ENCODE measurements at regions of chr2 and their contacts with region 1.

Region 1: DNA sequence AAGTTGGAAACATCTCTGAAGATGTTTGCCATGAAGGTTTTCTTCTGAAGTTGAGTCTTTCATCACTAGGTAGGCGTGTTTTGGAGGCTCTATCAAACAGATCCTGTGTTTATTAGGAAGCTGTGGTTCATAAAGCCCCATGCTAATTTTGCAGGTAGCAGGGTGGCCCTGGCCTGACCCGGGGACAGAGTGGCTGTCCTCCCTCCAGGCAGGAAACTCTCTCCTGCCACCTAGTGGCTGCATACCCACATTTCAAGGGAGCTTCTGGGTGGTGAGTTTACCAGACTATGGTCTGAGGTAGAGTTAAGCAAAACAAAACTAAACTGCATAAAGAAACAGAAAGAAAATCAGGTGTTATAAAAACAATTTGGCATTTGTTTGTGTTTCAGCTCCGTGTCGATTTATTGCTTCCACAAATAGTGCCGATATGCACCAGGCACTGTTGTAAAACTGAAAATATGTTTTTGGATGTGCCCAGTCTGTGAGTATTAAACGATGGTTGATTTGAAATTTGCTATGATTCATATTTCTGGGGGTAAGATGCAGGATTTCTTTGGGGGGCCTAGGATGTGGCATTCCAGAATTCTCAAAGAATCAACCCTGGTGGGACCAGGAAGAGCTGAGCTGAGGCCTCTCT is 26.0 kb upstream of the IL37 start:
- DNase-seq: peak; percentile 86
- H3K4me3 Mint-ChIP-seq: no peak overlapping the region
- H3K27ac Mint-ChIP-seq: peak overlapping the region; percentile 6
- H3K4me1 Mint-ChIP-seq: peaks cover 27% of the 10 kb centered on the region
- H3K27me3 Mint-ChIP-seq: no peaks in the 10 kb centered on the region

Region 2: GRCh38 chr2:112584134-112584890 is 300.7 kb before region 1 on chr2 and contains the start of gene CHCHD5:
- CTCF ChIA-PET with region 1: no interaction called
- POLR2A ChIA-PET with region 1: no interaction called
- intact Hi-C with region 1: no loop called
- DNase-seq: peak; percentile 97
- H3K4me3 Mint-ChIP-seq: peak within 1 kb of the TSS; percentile 97
- H3K27ac Mint-ChIP-seq: peak within 1 kb of the TSS; percentile 99
- H3K4me1 Mint-ChIP-seq: peaks cover 30% of the 10 kb centered on the region
- H3K27me3 Mint-ChIP-seq: no peaks in the 10 kb centered on the region
- total RNA-seq, gene CHCHD5: 39.3 to 41.4 TPM

Region 3: DNA sequence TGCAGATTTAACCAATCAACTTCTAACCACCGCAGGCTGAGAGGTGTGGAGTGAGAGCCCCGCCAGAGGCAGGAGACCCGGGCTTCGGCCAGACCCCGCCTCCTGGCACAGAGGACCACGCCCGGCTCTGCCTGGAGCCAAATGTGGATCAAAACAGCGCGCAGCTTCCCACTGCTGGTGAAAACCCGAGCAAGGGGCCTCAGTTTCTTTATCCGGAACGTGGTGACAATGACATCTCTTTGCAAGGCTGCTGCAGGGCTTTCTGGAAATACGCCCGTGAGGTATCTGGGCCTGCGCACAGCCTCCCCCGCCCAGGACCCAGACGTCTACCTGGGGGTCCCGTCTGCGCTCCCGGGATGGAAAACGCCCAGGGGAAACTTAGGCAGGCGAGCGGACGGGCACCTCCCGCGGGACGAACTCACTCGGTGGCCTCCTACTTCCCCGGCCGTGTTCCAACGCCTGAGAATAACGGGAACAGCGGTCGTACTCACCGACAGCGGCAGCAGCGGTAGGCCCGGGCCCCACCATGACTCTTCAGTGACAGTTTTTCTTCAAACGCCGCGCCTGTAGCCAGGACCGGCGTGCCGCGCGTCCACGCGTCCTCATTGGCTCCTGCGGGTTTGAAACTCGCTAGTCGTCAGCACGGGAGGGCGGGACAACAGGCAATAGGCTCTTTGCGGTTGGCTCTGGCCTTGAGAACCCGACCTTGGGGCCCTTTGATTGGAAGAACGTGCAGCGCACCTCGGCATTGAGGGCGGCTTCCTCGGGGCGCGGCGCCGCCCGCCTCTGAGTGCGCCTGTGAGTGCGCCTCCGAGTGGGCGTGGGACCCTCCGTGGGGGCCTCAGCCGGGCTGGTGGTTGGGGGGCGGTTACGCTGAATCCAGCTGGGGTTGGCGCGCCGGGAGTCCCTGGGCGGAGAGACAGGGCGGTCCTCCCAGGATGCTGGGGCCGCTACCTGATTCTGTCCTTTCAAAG is 120.6 kb before region 1 on chr2 and contains the start of gene CKAP2L:
- CTCF ChIA-PET with region 1: interaction called, 23 read pairs
- POLR2A ChIA-PET with region 1: no interaction called
- intact Hi-C with region 1: loop called (anchors 1 kb)
- DNase-seq: peak; percentile 98
- H3K4me3 Mint-ChIP-seq: peak within 1 kb of the TSS; percentile 90
- H3K27ac Mint-ChIP-seq: peak within 1 kb of the TSS; percentile 85
- H3K4me1 Mint-ChIP-seq: peaks cover 31% of the 10 kb centered on the region
- H3K27me3 Mint-ChIP-seq: no peaks in the 10 kb centered on the region
- total RNA-seq, gene CKAP2L: 42.1 to 46.1 TPM

Region 4: DNA sequence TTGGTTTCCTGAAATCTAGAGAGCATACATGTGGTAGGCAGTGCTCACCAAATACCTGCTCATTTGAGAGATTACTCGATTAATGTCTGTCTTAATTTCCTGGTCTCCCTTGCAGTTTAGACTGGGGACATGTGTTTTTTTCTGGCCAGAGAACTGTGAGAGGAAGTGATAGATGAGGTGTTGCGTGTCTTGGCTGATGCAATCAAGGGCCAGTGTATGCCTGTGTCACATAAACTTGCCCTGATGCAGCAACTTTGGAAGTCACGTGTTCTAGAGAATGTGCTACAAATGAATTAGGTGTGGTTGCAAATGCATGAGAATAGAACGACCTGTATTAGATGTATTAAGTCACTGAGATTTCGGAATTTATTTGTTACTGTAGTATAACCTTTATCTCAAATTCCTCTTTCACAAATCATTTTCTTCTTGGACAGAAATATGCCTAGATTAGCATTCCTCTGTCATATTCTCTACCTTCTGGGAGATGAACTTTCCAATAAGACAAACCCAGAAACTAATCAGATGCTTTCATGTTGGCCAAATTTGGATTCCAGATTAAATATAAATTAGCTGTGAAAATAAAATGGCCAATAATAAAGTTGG is 90.8 kb before region 1 on chr2:
- CTCF ChIA-PET with region 1: interaction called, 5 read pairs
- POLR2A ChIA-PET with region 1: no interaction called
- intact Hi-C with region 1: loop called (anchors 5 kb)
- DNase-seq: peak; percentile 74
- H3K4me3 Mint-ChIP-seq: peak overlapping the region; percentile 18
- H3K27ac Mint-ChIP-seq: peak overlapping the region; percentile 85
- H3K4me1 Mint-ChIP-seq: peaks cover 27% of the 10 kb centered on the region
- H3K27me3 Mint-ChIP-seq: no peaks in the 10 kb centered on the region

Region 5: GRCh38 chr2:112821142-112821541 is 63.8 kb before region 1 on chr2:
- CTCF ChIA-PET with region 1: interaction called, 5 read pairs
- POLR2A ChIA-PET with region 1: no interaction called
- intact Hi-C with region 1: loop called (anchors 2 kb)
- DNase-seq: peak; percentile 73
- H3K4me3 Mint-ChIP-seq: no peak overlapping the region
- H3K27ac Mint-ChIP-seq: peak overlapping the region; percentile 20
- H3K4me1 Mint-ChIP-seq: peaks cover 26% of the 10 kb centered on the region
- H3K27me3 Mint-ChIP-seq: no peaks in the 10 kb centered on the region

Region 6: DNA sequence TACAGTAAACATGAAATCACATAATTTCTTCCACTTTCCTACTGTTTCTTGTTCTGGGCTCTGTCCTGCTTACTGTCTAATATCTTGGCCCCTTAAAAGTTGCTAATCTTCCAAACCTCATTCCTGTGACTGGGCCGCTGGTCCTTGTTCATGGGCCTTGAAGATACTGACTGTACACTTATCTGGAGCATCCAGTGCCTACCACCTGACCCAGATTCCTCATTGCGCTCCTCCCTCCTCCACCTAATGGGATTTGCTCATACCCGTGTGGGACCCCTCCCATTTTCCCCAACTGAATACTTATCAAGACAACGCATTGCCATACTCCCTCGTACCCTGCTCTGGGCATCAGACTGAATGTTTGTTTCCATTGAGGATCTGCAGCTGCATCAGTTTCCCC is 19.9 kb after region 1 on chr2:
- CTCF ChIA-PET with region 1: interaction called, 23 read pairs
- POLR2A ChIA-PET with region 1: no interaction called
- intact Hi-C with region 1: no loop called
- DNase-seq: no peak
- H3K4me3 Mint-ChIP-seq: no peak overlapping the region
- H3K27ac Mint-ChIP-seq: no peak overlapping the region
- H3K4me1 Mint-ChIP-seq: no peaks in the 10 kb centered on the region
- H3K27me3 Mint-ChIP-seq: peaks cover 3% of the 10 kb centered on the region

Region 7: DNA sequence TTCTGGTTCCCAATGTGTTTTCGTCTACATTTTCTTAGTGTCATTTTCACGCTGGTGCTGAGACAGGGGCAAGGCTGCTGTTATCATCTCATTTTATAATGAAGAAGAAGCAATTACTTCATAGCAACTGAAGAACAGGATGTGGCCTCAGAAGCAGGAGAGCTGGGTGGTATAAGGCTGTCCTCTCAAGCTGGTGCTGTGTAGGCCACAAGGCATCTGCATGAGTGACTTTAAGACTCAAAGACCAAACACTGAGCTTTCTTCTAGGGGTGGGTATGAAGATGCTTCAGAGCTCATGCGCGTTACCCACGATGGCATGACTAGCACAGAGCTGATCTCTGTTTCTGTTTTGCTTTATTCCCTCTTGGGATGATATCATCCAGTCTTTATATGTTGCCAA is 100.1 kb after region 1 on chr2:
- CTCF ChIA-PET with region 1: no interaction called
- POLR2A ChIA-PET with region 1: no interaction called
- intact Hi-C with region 1: no loop called
- DNase-seq: peak; percentile 55
- H3K4me3 Mint-ChIP-seq: no peak overlapping the region
- H3K27ac Mint-ChIP-seq: no peak overlapping the region
- H3K4me1 Mint-ChIP-seq: peaks cover 20% of the 10 kb centered on the region
- H3K27me3 Mint-ChIP-seq: no peaks in the 10 kb centered on the region

Region 8: DNA sequence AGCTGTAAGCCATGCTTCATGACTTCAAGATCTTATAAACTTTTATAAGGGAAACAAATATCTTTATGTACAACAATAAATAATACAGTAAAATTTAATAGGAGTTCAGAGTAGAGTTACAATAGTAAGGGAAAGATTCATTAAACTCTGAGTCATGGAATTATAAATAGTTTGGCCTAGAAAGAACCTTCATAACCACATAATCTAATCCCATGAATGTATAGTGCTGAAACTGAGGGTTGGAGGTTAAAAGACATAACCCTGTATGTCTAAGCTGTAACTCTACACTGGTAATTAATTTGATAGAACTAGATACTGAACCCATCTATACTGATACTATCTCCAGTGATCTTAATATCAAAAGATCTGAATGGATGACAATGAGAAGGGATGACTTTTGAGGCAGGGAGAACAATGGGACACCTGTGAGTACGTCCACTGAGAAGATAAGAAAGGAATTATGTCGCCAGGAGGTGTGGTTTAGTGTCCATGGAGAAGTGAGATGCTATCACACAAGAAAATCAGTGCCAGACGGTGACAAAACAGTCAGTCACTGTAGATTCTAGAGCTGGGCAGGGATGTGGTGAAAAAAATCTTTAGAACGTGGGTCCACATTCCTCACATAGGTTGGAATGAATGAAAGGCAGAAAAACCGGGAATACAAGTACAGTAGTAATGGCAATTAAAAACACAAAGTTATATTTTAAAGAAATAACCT is 183.9 kb after region 1 on chr2:
- CTCF ChIA-PET with region 1: no interaction called
- POLR2A ChIA-PET with region 1: no interaction called
- intact Hi-C with region 1: no loop called
- DNase-seq: no peak
- H3K4me3 Mint-ChIP-seq: no peak overlapping the region
- H3K27ac Mint-ChIP-seq: no peak overlapping the region
- H3K4me1 Mint-ChIP-seq: no peaks in the 10 kb centered on the region
- H3K27me3 Mint-ChIP-seq: no peaks in the 10 kb centered on the region